SK-N-SH (cell line): ENCODE measurements at regions of chr5 and their contacts with region 1.

Region 1: DNA sequence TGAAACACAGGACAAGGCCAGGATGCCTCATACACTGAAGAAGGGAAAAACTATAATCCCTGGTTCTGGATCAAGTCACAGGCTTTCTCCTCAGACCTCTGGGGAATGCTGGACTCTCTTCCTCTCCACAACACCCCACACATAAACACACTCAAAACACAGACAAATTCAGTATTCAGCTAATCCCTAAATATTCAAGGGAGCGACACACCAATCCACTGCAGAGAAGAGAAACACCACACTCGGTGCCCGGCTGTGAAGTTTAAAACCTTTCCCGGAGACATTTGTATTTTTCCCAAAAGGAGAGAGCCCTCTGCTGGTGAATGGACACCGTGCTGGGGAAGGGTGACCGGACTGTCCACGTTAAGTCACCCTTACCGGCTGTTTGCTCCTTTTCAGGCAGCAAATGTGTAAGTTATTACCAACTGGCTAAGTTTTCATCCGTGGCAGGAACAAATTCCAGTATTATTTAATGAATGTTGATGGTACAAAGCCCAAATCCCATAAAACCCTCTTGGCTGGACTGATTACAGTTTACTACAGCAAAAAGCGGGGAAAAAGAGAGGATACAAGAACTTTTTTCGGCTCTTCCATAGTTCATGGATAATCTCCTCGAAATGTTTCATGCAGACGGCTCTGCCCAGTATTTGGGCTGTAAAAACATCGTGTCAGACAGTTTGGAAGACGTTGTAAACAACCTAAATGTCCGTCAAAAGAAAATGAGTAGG is 130.9 kb upstream of the SLC30A5 start:
- DNase-seq: peak; percentile 74
- H3K4me3 ChIP-seq: peak overlapping the region in 1 of 2 experiments; percentile 47; a peak in 1 of 4 replicates
- H3K27ac ChIP-seq: no peak overlapping the region; a peak in 1 of 4 replicates
- H3K4me1 ChIP-seq: no peaks in the 10 kb centered on the region; a peak in 1 of 4 replicates
- H3K27me3 ChIP-seq: no peaks in the 10 kb centered on the region
- CTCF ChIP-seq: peak; percentile 87
- EP300 ChIP-seq: no peak
- RAD21 ChIP-seq: peak; percentile 88

Region 2: GRCh38 chr5:68419637-68420452 is 543.1 kb before region 1 on chr5:
- CTCF ChIA-PET with region 1: no interaction called
- POLR2A ChIA-PET with region 1: no interaction called
- DNase-seq: no peak
- H3K4me3 ChIP-seq: no peak overlapping the region
- H3K27ac ChIP-seq: no peak overlapping the region
- H3K4me1 ChIP-seq: peaks cover 7 to 28% of the 10 kb centered on the region in 2 experiments; a peak in 3 of 4 replicates
- H3K27me3 ChIP-seq: no peaks in the 10 kb centered on the region
- CTCF ChIP-seq: no peak
- EP300 ChIP-seq: no peak
- RAD21 ChIP-seq: no peak

Region 3: DNA sequence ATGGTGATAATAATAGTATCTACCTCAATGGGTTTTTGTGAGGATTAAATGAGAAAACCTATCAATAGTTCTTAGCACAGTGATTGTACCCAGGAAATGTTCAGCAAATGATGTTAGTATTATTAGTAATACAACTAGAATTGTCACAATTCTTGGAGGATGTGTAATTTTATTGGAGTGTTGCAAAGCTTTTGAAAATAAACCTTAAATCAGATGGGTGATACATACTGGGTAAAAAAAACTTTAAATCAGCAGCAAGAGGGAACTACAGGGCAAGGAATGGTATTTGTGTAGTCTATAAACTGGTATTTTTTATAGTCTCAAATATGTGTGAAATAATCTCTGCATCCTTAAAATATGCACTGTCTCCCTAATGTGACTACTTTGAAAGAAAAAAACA is 375.8 kb before region 1 on chr5:
- CTCF ChIA-PET with region 1: no interaction called
- POLR2A ChIA-PET with region 1: no interaction called
- DNase-seq: no peak
- H3K4me3 ChIP-seq: no peak overlapping the region
- H3K27ac ChIP-seq: no peak overlapping the region
- H3K4me1 ChIP-seq: no peaks in the 10 kb centered on the region
- H3K27me3 ChIP-seq: no peaks in the 10 kb centered on the region
- CTCF ChIP-seq: no peak
- EP300 ChIP-seq: no peak
- RAD21 ChIP-seq: no peak

Region 4: GRCh38 chr5:68924490-68925145 is 38.3 kb before region 1 on chr5:
- CTCF ChIA-PET with region 1: no interaction called
- POLR2A ChIA-PET with region 1: no interaction called
- DNase-seq: no peak
- H3K4me3 ChIP-seq: no peak overlapping the region
- H3K27ac ChIP-seq: no peak overlapping the region
- H3K4me1 ChIP-seq: no peaks in the 10 kb centered on the region
- H3K27me3 ChIP-seq: no peaks in the 10 kb centered on the region
- CTCF ChIP-seq: no peak
- EP300 ChIP-seq: no peak
- RAD21 ChIP-seq: no peak

Region 5: DNA sequence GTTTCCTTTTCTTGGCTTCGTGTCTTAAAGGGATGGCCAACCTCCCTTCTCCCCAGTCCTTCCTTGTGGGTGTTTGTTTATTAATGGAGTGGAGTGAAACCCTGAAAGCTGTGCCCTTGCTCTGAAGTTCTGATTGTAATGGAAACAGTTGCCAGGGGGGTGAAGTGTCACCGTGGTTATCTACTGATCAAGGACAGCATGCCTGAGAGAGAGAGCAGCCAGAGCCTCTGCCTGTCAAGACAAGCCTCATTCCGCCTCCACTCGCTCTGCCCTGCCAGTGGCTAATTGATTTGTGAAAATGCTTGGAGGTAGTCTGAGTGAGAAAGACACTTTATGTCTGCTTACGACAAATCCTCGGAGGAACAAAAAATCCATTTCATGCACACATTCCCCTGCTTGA is 12.8 kb before region 1 on chr5:
- CTCF ChIA-PET with region 1: interaction called, 11 read pairs
- POLR2A ChIA-PET with region 1: no interaction called
- DNase-seq: peak; percentile 69
- H3K4me3 ChIP-seq: no peak overlapping the region
- H3K27ac ChIP-seq: peak overlapping the region in 1 of 2 experiments; percentile 72; a peak in 2 of 4 replicates
- H3K4me1 ChIP-seq: peaks cover 0 to 14% of the 10 kb centered on the region in 2 experiments; a peak in 2 of 4 replicates
- H3K27me3 ChIP-seq: no peaks in the 10 kb centered on the region
- CTCF ChIP-seq: no peak
- EP300 ChIP-seq: peak in 1 of 2 experiments; percentile 69; a peak in 1 of 4 replicates
- RAD21 ChIP-seq: no peak

Region 6: GRCh38 chr5:68994645-68995044 is 31.7 kb after region 1 on chr5:
- CTCF ChIA-PET with region 1: no interaction called
- POLR2A ChIA-PET with region 1: no interaction called
- DNase-seq: peak; percentile 30
- H3K4me3 ChIP-seq: no peak overlapping the region
- H3K27ac ChIP-seq: peak overlapping the region in 1 of 2 experiments; percentile 85; a peak in 2 of 4 replicates
- H3K4me1 ChIP-seq: peaks cover 0 to 10% of the 10 kb centered on the region in 2 experiments; a peak in 2 of 4 replicates
- H3K27me3 ChIP-seq: no peaks in the 10 kb centered on the region
- CTCF ChIP-seq: no peak
- EP300 ChIP-seq: no peak
- RAD21 ChIP-seq: no peak